Right ventricle myocardium superior (tissue), 1 donor: ENCODE measurements at regions of chr1 and their contacts with region 1.

Region 1: GRCh38 chr1:31959521-31960340 is 21.6 kb upstream of the PTP4A2 start:
- DNase-seq: no peak
- ATAC-seq: no peak

Region 2: DNA sequence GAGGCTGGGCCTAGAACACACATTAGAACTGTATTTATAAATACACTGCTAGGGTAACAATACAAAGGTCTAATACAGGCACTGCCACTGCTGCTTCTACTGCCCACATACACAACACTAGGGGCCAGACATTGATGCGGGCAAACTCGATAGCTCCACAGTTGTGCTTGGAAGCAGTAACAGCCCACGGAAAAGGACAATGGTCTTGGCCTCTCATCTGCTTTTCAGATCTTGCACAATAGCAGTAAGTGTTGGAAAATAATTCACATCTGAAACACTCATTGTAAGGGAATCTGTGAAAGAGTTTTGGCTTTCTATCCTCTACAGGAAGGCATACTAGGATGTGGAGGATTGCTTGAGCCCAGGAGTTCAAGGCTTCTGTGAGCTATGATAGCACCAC is 137.0 kb before region 1 on chr1:
- intact Hi-C with region 1: loop called (anchors 10 kb)
- DNase-seq: no peak
- ATAC-seq: no peak